GM10248 (cell line): ENCODE measurements at regions of chr2 and their contacts with region 1.

Region 1: DNA sequence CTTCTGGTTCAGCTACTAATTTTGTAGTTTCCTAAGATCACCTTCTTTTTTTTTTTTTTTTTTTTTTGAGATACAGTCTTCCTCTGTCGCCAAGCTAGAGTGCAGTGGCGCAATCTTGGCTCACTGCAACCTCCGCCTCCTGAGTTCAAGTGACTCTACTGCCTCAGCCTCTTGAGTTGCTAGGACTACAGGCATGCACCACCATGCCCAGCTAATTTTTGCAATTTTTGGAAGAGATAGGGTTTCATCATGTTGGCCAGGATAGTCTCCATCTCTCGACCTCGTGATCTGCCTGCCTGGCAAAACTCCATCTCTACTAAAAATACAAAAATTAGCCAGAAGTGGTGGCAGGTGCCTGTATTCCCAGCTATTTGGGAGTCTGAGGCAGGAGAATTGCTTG is 301.5 kb upstream of the TFPI start:
- DNase-seq: no peak
- CTCF ChIP-seq: no peak

Region 2: DNA sequence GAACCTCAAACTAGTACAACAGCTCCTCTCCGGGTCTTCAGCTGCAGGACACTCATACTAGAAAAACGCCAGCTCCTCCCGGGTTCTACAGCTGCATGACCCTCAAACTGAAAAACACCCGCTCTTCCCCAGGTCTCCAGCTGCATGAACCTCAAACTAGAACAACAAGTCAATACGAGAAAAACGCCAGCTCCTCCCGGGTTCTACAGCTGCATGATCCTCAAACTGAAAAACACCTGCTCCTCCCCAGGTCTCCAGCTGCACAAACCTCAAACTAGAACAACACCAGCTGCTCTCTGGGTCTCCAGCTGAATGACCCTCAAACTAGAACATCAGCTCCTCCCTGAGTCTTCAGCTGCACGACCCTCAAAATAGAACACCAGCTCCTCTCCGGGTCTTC is 13.5 kb after region 1 on chr2:
- CTCF ChIA-PET with region 1: interaction called, 10 read pairs
- POLR2A ChIA-PET with region 1: no interaction called
- DNase-seq: no peak
- CTCF ChIP-seq: no peak